CD4-positive, alpha-beta memory T cell (primary cell): ENCODE measurements at regions of chr7 and their contacts with region 1.

Region 1: GRCh38 chr7:138584696-138585095 is 116.5 kb downstream of the SVOPL start:
- DNase-seq: no peak
- H3K4me3 ChIP-seq: no peak overlapping the region
- H3K4me3 Mint-ChIP-seq: no peak overlapping the region
- H3K27ac ChIP-seq: no peak overlapping the region
- H3K27ac Mint-ChIP-seq: peak overlapping the region in 2 of 7 donors; percentile 4 to 30
- H3K4me1 ChIP-seq: no peaks in the 10 kb centered on the region
- H3K4me1 Mint-ChIP-seq: no peaks in the 10 kb centered on the region
- H3K27me3 ChIP-seq: no peaks in the 10 kb centered on the region
- H3K27me3 Mint-ChIP-seq: no peaks in the 10 kb centered on the region

Region 2: GRCh38 chr7:138527746-138528223 is 56.9 kb before region 1 on chr7:
- CTCF ChIA-PET with region 1: no interaction called
- POLR2A ChIA-PET with region 1: no interaction called
- intact Hi-C with region 1: loop called (anchors 10 kb)
- DNase-seq: peak in 1 of 5 donors; percentile 2
- H3K4me3 ChIP-seq: no peak overlapping the region
- H3K4me3 Mint-ChIP-seq: peak overlapping the region in 1 of 8 donors; percentile 3
- H3K27ac ChIP-seq: no peak overlapping the region
- H3K27ac Mint-ChIP-seq: no peak overlapping the region
- H3K4me1 ChIP-seq: no peaks in the 10 kb centered on the region
- H3K4me1 Mint-ChIP-seq: no peaks in the 10 kb centered on the region
- H3K27me3 ChIP-seq: no peaks in the 10 kb centered on the region
- H3K27me3 Mint-ChIP-seq: no peaks in the 10 kb centered on the region